ENCODE measurements at regions of chr1 and their contacts with region 1.

Region 1: GRCh38 chr1:173269490-173270230 is 62.5 kb upstream of the TNFSF4 start:
- DNase-seq: no peak
- CTCF ChIP-seq: no peak

Region 2: DNA sequence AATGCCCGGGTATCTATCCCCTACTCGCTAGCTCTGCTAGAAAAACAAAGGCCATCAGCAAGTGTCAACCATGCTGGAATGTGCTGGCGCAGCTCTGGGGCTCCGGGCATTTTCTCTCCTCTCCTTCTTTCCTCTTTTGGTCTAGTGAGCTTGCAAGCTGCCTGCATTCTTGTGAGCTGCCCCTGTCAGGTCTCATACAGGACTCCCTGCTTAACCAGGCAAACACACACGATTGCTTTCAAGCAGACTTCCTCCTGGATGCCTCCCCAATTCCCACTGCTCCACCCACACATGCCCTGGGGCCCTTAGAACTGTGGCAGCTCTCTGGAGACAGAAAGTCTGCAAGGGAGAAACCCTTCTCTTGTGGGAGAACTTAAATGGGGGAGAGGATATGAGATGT is 772.4 kb before region 1 on chr1:
- in situ Hi-C with region 1: no loop called
- DNase-seq: no peak
- CTCF ChIP-seq: no peak

Region 3: GRCh38 chr1:172638885-172639831 is 630.5 kb before region 1 on chr1:
- in situ Hi-C with region 1: no loop called
- DNase-seq: no peak
- CTCF ChIP-seq: no peak

Region 4: GRCh38 chr1:173409613-173410012 is 140.0 kb after region 1 on chr1:
- in situ Hi-C with region 1: loop called (anchors 10 kb)
- DNase-seq: no peak
- CTCF ChIP-seq: no peak

Region 5: GRCh38 chr1:173520799-173521198 is 251.1 kb after region 1 on chr1:
- in situ Hi-C with region 1: no loop called
- DNase-seq: no peak
- CTCF ChIP-seq: no peak

Measured in GM13976 (cell line).